Activated B cell treated with CpG ODN at 0.5 μM for 24 hours (primary cell): ENCODE measurements at regions of chr4 and their contacts with region 1.

Region 1: GRCh38 chr4:2281575-2282343 is 19.9 kb upstream of the MXD4 start:
- DNase-seq: peak; percentile 57
- ATAC-seq: peak; percentile 93
- H3K4me3 Mint-ChIP-seq: peak overlapping the region; percentile 70
- H3K27ac Mint-ChIP-seq: peak overlapping the region; percentile 97
- H3K4me1 Mint-ChIP-seq: peaks cover 35% of the 10 kb centered on the region
- H3K27me3 Mint-ChIP-seq: no peaks in the 10 kb centered on the region
- CTCF ChIP-seq: no peak

Region 2: DNA sequence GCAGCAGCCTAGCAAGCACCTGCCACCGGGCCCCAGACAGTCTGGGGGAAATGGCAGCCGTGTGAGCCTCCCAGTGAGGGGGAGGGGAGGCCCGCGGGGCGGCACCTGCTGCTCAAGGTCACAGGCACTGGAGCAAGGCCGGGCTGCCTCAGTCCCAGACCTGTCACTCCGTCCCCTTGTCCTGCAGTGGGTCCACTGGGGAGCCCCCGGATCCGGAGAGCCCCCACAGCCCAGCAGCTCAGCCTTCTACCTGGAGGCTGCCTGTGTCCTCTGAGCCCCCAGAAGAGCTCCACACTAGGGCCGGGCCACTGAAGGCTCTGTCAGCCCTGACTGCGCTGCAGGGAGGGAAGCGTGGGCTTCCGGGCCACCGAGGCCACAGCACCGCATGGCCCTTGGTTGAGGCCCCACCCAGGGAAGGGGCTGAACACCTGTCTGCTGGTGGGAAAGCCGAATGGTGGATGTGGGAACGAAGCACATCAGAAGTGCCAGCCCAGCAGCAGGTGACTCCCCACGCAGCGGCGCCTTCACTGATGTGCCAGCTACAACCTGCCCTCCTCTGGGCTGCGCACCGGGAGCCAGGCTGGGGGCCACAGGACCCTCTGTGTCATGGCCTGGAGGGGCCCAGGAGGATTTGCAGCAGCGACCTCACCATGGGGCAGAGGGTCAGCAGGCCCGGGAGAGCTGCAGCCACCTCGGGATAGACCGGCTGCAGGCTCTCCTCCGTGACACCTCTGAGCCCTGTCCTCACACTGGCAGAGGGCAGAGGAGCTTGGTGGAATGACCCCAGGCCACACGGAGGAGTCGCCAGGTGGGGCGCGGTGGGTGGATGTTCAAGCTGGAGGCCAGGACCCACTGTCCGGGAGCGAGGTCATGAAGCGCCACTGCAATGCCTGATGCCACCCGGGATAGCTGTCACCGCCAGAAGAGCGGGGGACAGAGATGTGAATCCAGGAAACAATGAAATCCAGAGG is 15.2 kb after region 1 on chr4:
- CTCF ChIA-PET with region 1: no interaction called
- POLR2A ChIA-PET with region 1: interaction called, 5 read pairs
- intact Hi-C with region 1: loop called (anchors 1 kb)
- DNase-seq: peak; percentile 12
- ATAC-seq: no peak
- H3K4me3 Mint-ChIP-seq: no peak overlapping the region
- H3K27ac Mint-ChIP-seq: no peak overlapping the region
- H3K4me1 Mint-ChIP-seq: peaks cover 16% of the 10 kb centered on the region
- H3K27me3 Mint-ChIP-seq: no peaks in the 10 kb centered on the region
- CTCF ChIP-seq: no peak

Region 3: DNA sequence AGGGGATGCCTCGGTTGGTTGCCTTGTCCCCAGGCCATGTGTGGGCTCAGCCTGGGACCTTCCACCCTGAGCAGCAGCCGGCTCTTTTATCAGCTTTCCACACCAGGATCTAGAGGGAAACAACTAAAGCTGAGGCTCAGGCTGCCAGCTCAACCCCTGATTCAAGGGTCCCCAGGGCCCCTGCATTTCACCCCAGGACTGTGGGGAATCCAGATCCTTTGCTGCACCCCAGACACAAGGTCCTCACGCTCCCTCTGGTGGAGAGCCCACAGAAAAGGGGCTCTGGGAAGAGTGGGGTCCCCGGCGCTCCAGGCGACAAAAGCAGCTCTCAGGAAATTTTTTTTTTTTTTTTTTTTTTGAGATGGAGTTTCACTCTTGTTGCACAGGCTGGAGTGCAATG is 72.4 kb after region 1 on chr4:
- CTCF ChIA-PET with region 1: no interaction called
- POLR2A ChIA-PET with region 1: interaction called, 3 read pairs
- intact Hi-C with region 1: loop called (anchors 1 kb)
- DNase-seq: no peak
- ATAC-seq: peak; percentile 35
- H3K4me3 Mint-ChIP-seq: no peak overlapping the region
- H3K27ac Mint-ChIP-seq: peak overlapping the region; percentile 56
- H3K4me1 Mint-ChIP-seq: peaks cover 12% of the 10 kb centered on the region
- H3K27me3 Mint-ChIP-seq: no peaks in the 10 kb centered on the region
- CTCF ChIP-seq: no peak

Region 4: GRCh38 chr4:2393353-2394270 is 111.9 kb after region 1 on chr4:
- CTCF ChIA-PET with region 1: no interaction called
- POLR2A ChIA-PET with region 1: no interaction called
- intact Hi-C with region 1: loop called (anchors 5 kb)
- DNase-seq: no peak
- ATAC-seq: peak; percentile 72
- H3K4me3 Mint-ChIP-seq: peak overlapping the region; percentile 81
- H3K27ac Mint-ChIP-seq: peak overlapping the region; percentile 73
- H3K4me1 Mint-ChIP-seq: peaks cover 32% of the 10 kb centered on the region
- H3K27me3 Mint-ChIP-seq: peaks cover 11% of the 10 kb centered on the region
- CTCF ChIP-seq: no peak

Region 5: GRCh38 chr4:2418650-2419571 is 137.2 kb after region 1 on chr4 and contains the start of gene CFAP99:
- CTCF ChIA-PET with region 1: no interaction called
- POLR2A ChIA-PET with region 1: interaction called, 4 read pairs
- intact Hi-C with region 1: loop called (anchors 1 kb)
- DNase-seq: peak; percentile 93
- ATAC-seq: peak; percentile 91
- H3K4me3 Mint-ChIP-seq: peak within 1 kb of the TSS; percentile 91
- H3K27ac Mint-ChIP-seq: peak within 1 kb of the TSS; percentile 90
- H3K4me1 Mint-ChIP-seq: peaks cover 39% of the 10 kb centered on the region
- H3K27me3 Mint-ChIP-seq: peaks cover 28% of the 10 kb centered on the region
- CTCF ChIP-seq: no peak
- total RNA-seq, gene CFAP99: not detected in 2 replicates

Region 6: DNA sequence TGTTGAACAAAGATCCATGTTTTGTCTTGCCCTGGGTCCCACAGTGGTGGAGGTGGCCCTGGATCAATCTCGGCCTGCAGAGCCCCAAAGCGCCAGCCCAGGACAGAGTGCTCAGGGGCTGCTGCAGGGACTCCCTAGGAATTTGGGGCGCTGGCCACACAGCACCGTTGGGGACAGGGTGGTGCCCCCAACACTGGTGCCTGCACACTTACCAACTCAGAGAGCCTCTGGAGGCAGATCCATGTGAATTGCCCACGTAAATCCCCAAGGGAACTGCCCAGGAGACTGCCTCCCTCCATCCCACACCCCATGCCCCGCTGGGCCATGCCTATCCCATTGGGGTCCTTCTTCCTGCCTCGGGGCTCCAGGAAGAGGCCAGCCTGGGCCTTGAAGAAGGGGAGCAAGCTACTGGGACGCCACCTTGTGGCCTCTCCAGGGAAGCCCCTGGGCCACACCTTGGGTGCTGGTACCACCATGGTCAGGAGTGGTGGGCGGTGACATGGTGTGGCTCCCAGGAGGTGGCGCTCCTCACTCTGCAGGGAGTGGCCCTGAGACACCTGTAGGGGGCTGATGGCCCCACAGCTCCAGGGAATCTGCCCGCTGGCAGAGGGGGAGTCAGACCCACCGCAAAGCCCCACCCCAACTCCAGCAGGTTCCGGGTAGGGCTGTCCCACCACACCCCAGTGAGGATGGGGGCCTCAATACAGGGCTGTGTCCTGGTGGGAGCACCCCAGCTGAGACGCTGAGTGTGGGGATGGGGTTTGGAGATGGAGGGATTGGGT is 159.8 kb after region 1 on chr4:
- CTCF ChIA-PET with region 1: no interaction called
- POLR2A ChIA-PET with region 1: no interaction called
- intact Hi-C with region 1: loop called (anchors 2 kb)
- DNase-seq: peak; percentile 61
- ATAC-seq: peak; percentile 100
- H3K4me3 Mint-ChIP-seq: no peak overlapping the region
- H3K27ac Mint-ChIP-seq: no peak overlapping the region
- H3K4me1 Mint-ChIP-seq: peaks cover 4% of the 10 kb centered on the region
- H3K27me3 Mint-ChIP-seq: no peaks in the 10 kb centered on the region
- CTCF ChIP-seq: no peak

Region 7: GRCh38 chr4:2462218-2462991 is 180.6 kb after region 1 on chr4:
- CTCF ChIA-PET with region 1: interaction called, 3 read pairs
- POLR2A ChIA-PET with region 1: no interaction called
- intact Hi-C with region 1: loop called (anchors 1 kb)
- DNase-seq: peak; percentile 72
- ATAC-seq: peak; percentile 97
- H3K4me3 Mint-ChIP-seq: peak overlapping the region; percentile 77
- H3K27ac Mint-ChIP-seq: no peak overlapping the region
- H3K4me1 Mint-ChIP-seq: peaks cover 11% of the 10 kb centered on the region
- H3K27me3 Mint-ChIP-seq: peaks cover 4% of the 10 kb centered on the region
- CTCF ChIP-seq: no peak